Breast epithelium (tissue), 4 donors: ENCODE measurements at regions of chr4 and their contacts with region 1.

Region 1: GRCh38 chr4:34108391-34108790 is 2135.9 kb downstream of the ARAP2 start:
- DNase-seq: no peak
- H3K4me3 ChIP-seq: no peak overlapping the region
- H3K27ac ChIP-seq: no peak overlapping the region
- H3K4me1 ChIP-seq: no peaks in the 10 kb centered on the region
- H3K27me3 ChIP-seq: no peaks in the 10 kb centered on the region
- CTCF ChIP-seq: no peak
- POLR2A ChIP-seq: no peak

Region 2: GRCh38 chr4:33737726-33738125 is 370.7 kb before region 1 on chr4:
- intact Hi-C with region 1: no loop called
- DNase-seq: no peak
- H3K4me3 ChIP-seq: no peak overlapping the region
- H3K27ac ChIP-seq: no peak overlapping the region
- H3K4me1 ChIP-seq: no peaks in the 10 kb centered on the region
- H3K27me3 ChIP-seq: no peaks in the 10 kb centered on the region
- CTCF ChIP-seq: no peak
- POLR2A ChIP-seq: no peak

Region 3: DNA sequence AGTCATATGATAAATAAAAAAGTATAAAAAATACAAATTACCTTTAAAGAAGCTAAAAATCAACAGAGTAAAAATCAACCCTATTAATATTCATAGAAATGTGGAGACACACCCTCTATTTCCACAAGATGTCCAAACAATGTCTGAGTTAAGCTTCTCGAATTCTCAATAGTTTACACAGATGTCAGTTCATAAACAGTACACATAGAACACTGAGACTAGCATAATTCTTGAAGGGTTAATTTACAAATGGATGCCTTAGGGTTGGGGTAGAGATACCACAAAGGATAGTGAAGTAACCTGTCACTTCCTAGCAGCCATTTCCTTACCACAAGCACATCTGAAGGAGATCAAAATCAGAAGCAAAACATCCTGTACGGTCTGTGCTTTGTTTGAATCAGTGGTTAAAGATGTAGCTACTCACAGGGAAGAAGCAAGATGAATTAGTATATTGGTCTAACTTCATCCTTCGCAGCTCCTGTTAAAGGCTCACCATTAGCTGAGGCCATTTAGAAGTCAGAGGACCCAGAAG is 258.0 kb before region 1 on chr4:
- intact Hi-C with region 1: no loop called
- DNase-seq: no peak
- H3K4me3 ChIP-seq: no peak overlapping the region
- H3K27ac ChIP-seq: no peak overlapping the region
- H3K4me1 ChIP-seq: no peaks in the 10 kb centered on the region
- H3K27me3 ChIP-seq: no peaks in the 10 kb centered on the region
- CTCF ChIP-seq: no peak
- POLR2A ChIP-seq: no peak

Region 4: GRCh38 chr4:34091451-34091850 is 16.9 kb before region 1 on chr4:
- intact Hi-C with region 1: no loop called
- DNase-seq: no peak
- H3K4me3 ChIP-seq: no peak overlapping the region
- H3K27ac ChIP-seq: no peak overlapping the region
- H3K4me1 ChIP-seq: no peaks in the 10 kb centered on the region
- H3K27me3 ChIP-seq: no peaks in the 10 kb centered on the region
- CTCF ChIP-seq: no peak
- POLR2A ChIP-seq: no peak

Region 5: GRCh38 chr4:34709564-34709963 is 601.2 kb after region 1 on chr4:
- intact Hi-C with region 1: loop called (anchors 10 kb)
- DNase-seq: no peak
- H3K4me3 ChIP-seq: no peak overlapping the region
- H3K27ac ChIP-seq: no peak overlapping the region
- H3K4me1 ChIP-seq: no peaks in the 10 kb centered on the region
- H3K27me3 ChIP-seq: no peaks in the 10 kb centered on the region
- CTCF ChIP-seq: no peak
- POLR2A ChIP-seq: no peak